Activated T-helper 1 cell treated with anti-CD3 and anti-CD28 coated beads, Interleukin-12 subunit alpha, Interleukin-12 subunit beta, Interleukin-2, Interleukin-4 antibody, amounts not matched to agents 30 ng/mL and 10 ng/mL and 1 ng/mL, durations not matched to agents 14 hours and 24 hours and 36 hours (primary cell): ENCODE measurements at regions of chr6 and their contacts with region 1.

Region 1: DNA sequence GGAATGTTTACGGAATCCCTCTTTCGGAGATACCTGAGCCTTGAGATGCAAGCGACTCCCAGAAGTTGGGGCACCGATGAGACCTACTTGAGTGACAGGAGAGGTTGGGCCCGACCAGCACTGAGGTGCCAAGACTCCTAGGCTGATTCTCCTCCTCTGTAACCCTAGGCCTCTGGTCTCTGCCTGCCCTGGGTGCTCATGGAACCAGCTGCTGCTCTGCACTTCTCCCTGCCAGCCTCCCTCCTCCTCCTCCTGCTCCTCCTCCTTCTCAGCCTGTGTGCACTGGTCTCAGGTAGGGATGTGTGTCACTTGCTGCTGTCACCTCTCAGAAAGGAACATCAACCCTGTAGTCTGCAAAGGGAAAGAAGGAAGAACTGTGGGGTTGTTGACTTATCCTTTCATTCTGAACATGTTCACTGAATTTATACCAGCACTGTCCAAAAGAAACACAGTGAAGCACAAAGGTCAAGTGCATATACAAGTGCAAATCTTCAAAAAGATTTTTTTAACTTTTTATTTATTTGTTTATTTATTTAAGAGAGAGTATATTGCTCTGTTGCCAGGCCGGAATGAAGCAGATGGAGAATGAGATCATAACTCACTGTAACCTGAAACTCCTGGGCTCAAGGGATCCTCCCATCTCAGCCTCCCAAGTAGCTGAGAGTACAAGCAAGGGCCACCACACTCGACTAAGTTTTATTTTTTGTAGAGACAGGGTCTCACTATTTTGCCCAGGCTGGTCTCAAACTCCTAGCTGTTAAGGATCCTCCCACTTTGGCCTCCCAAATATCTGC is 913 bp downstream of the BTN2A2 start:
- DNase-seq: no peak
- H3K4me3 Mint-ChIP-seq: peak overlapping the region; percentile 95
- H3K27ac Mint-ChIP-seq: peak overlapping the region; percentile 90
- H3K4me1 Mint-ChIP-seq: peaks cover 57% of the 10 kb centered on the region
- H3K27me3 Mint-ChIP-seq: no peaks in the 10 kb centered on the region

Region 2: DNA sequence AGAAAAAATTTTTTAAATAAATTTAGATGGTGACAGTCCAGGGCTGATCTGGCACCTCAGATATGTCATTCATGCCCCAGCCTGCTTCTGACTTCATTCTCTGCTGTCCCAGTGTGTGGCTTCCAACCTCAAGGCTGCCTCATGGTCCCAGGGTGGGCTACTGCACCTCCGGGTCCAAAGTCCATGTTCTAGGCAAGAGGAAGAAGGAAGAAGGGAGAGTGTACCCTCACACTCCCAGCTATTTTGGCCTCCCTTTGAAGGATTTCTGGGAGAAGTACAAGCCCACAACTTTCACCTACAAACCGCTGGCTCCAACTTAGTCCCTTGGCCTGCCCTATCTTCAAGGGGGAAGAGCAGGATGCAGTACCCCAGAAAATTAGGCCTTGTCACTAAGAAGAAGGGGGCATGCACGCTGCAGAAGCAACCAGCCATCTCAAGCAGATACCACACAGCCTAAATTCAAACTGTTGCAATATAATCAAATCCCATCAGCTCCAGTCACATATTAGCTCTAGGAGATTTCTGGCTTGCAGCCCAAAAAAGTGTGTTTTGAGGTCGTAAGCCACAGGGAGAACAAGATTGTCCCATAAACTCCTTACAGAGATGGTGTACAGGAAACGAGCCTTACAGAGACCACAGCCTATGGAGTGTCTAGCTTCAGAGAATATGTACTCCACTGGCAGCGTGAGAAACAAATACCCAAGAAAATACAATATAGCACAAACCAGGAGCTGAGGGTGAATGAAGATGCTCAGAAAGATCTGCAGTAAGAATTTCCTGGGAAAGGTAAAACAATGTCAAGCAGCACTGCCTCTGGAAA is 19.7 kb before region 1 on chr6:
- intact Hi-C with region 1: loop called (anchors 2 kb)
- DNase-seq: peak; percentile 10
- H3K4me3 Mint-ChIP-seq: no peak overlapping the region
- H3K27ac Mint-ChIP-seq: no peak overlapping the region
- H3K4me1 Mint-ChIP-seq: peaks cover 45% of the 10 kb centered on the region
- H3K27me3 Mint-ChIP-seq: no peaks in the 10 kb centered on the region

Region 3: DNA sequence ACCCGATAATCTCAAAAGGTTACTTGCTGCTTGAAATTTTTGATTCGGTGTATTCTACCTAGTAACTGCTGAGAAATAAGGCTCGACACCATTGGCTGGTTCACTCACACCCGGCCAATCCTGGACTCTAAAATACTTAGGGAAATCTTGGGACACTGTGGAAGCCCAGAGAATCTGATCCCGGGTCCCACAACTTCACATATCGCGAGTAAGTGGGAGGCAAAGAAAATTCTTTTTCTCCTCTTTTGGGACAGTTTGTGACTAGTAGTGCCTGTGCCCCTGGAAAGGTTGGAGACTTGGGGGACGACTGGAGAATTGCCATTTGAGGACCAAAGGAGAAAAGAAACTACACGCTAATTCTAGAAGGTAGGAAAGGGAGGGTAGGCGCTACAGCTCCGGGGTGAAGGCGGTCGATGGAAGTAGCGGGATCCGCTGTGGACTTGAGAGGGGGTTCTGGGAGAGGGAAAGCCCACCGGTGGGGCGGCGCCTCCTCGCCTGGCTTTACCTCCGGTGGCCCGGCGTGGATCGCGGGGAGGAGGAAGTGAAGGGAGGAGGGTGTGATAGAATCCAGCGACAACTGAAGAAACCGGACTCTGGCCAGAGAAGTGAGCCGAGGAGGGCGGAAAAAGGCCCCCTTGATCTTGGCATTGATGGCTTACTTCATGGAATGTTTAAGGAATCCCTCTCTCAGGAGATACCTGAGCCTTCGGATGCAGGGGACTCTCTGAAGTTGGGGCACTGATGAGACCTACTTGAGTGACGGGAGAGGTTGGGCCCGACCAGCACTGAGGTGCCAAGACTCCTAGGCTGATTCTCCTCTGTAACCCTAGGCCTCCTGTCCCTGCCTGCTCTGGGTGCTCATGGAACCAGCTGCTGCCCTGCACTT is 37.7 kb after region 1 on chr6:
- intact Hi-C with region 1: loop called (anchors 2 kb)
- DNase-seq: peak; percentile 37
- H3K4me3 Mint-ChIP-seq: no peak overlapping the region
- H3K27ac Mint-ChIP-seq: no peak overlapping the region
- H3K4me1 Mint-ChIP-seq: peaks cover 4% of the 10 kb centered on the region
- H3K27me3 Mint-ChIP-seq: no peaks in the 10 kb centered on the region

Region 4: GRCh38 chr6:26464416-26465131 is 80.8 kb after region 1 on chr6:
- intact Hi-C with region 1: no loop called
- DNase-seq: no peak
- H3K4me3 Mint-ChIP-seq: no peak overlapping the region
- H3K27ac Mint-ChIP-seq: peak overlapping the region; percentile 13
- H3K4me1 Mint-ChIP-seq: peaks cover 54% of the 10 kb centered on the region
- H3K27me3 Mint-ChIP-seq: peaks cover 1% of the 10 kb centered on the region